CD8-positive, alpha-beta T cell (primary cell): ENCODE measurements at regions of chrX and their contacts with region 1.

Region 1: DNA sequence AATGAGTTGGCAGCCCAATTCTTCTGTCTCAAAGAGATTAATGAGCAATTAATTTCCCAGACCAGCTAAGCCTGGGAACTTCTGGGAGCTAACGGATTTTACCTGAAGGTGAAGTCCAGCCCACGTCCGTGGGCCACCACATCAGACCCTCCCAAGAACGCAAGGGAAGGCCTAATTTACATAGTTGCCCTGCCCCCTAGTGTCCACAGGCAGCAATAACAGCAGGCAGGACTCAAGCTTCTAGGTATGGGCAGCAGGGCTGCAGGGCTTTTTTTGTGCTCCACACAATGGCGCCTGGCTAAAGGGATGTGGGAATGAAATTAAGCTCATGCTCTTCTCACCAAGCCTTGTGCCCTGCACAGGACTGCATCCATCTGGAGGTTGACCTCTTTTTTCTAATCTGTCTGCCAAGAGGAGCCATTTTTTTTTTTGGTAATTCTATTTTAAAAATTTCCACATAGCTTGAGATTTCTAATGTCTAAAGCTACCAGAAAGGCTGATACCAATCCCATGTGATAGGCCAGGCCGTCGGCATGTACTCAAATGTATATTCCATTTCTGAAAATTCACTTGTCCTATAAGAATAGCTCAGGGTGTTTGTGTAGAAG is 111.9 kb upstream of the TMEM164 start:
- DNase-seq: peak in 8 of 9 experiments; percentile 1 to 64 (median 38)
- ATAC-seq: peak; percentile 70
- H3K4me3 ChIP-seq: no peak overlapping the region
- H3K4me3 Mint-ChIP-seq: no peak overlapping the region
- H3K27ac ChIP-seq: no peak overlapping the region
- H3K27ac Mint-ChIP-seq: no peak overlapping the region
- H3K4me1 ChIP-seq: no peaks in the 10 kb centered on the region
- H3K4me1 Mint-ChIP-seq: no peaks in the 10 kb centered on the region
- H3K27me3 ChIP-seq: no peaks in the 10 kb centered on the region
- H3K27me3 Mint-ChIP-seq: peaks cover 3% of the 10 kb centered on the region
- CTCF ChIP-seq: peak; percentile 65

Region 2: DNA sequence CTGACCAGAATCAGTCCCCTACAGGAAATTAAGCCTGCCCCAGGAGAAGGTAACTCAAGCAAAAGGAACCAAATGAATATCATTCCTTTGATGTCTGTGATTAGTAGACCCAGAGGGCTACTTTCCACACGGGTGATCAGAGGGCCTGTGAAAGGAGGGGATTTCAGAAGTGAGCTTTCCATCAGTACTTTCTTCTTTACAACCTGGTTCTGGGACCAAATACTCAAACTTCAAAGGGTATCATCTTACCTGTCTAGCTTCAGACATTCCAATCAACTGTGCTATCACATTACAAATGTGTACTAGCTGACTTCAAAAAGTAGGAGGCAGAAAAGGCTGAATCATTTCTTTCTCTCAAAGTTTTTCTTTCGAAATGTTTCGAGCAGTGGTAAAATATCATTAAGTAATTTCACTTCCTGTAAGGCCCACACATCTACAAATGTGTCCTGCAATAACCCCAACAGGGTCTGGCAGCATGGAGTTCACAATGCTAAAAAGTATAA is 181.8 kb before region 1 on chrX:
- CTCF ChIA-PET with region 1: interaction called, 10 read pairs
- POLR2A ChIA-PET with region 1: no interaction called
- intact Hi-C with region 1: loop called (anchors 1 to 5 kb)
- DNase-seq: peak in 2 of 9 experiments; percentile 3 to 32
- ATAC-seq: peak; percentile 20
- H3K4me3 ChIP-seq: no peak overlapping the region
- H3K4me3 Mint-ChIP-seq: peak overlapping the region; percentile 58
- H3K27ac ChIP-seq: peak overlapping the region in 1 of 2 experiments; percentile 45
- H3K27ac Mint-ChIP-seq: peak overlapping the region; percentile 67
- H3K4me1 ChIP-seq: peaks cover 19% of the 10 kb centered on the region
- H3K4me1 Mint-ChIP-seq: peaks cover 63% of the 10 kb centered on the region
- H3K27me3 ChIP-seq: no peaks in the 10 kb centered on the region
- H3K27me3 Mint-ChIP-seq: no peaks in the 10 kb centered on the region
- CTCF ChIP-seq: no peak

Region 3: DNA sequence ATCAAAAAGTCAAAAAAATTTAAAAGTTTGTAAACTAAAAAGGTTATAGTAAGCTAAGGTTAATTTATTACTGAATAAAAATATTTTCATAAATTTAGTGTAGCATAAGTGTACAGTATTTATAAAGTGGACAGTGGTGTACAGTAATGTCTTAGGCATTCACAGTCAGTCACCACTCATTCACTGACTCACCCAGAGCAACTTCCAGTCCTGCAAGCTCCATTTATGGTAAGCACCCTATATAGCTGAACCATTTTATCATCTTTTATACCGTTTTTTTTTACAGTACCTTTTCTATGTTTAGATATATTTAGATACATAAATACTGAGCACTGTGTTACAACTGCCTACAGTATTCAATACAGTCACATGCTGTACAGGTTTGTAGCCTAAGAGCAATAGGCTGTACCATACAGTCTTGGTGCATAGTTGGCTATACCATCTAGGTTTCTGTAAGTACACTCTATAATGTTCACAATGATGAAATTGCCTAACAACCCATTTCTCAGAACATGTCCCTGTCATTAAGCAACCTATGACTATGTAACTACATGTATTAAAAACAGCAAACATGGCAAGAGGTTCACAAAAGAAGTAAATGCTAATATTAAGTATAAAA is 176.6 kb before region 1 on chrX:
- CTCF ChIA-PET with region 1: interaction called, 10 read pairs
- POLR2A ChIA-PET with region 1: no interaction called
- intact Hi-C with region 1: loop called (anchors 1 to 5 kb)
- DNase-seq: no peak
- ATAC-seq: no peak
- H3K4me3 ChIP-seq: no peak overlapping the region
- H3K4me3 Mint-ChIP-seq: no peak overlapping the region
- H3K27ac ChIP-seq: no peak overlapping the region
- H3K27ac Mint-ChIP-seq: no peak overlapping the region
- H3K4me1 ChIP-seq: no peaks in the 10 kb centered on the region
- H3K4me1 Mint-ChIP-seq: peaks cover 42% of the 10 kb centered on the region
- H3K27me3 ChIP-seq: no peaks in the 10 kb centered on the region
- H3K27me3 Mint-ChIP-seq: no peaks in the 10 kb centered on the region
- CTCF ChIP-seq: no peak

Region 4: DNA sequence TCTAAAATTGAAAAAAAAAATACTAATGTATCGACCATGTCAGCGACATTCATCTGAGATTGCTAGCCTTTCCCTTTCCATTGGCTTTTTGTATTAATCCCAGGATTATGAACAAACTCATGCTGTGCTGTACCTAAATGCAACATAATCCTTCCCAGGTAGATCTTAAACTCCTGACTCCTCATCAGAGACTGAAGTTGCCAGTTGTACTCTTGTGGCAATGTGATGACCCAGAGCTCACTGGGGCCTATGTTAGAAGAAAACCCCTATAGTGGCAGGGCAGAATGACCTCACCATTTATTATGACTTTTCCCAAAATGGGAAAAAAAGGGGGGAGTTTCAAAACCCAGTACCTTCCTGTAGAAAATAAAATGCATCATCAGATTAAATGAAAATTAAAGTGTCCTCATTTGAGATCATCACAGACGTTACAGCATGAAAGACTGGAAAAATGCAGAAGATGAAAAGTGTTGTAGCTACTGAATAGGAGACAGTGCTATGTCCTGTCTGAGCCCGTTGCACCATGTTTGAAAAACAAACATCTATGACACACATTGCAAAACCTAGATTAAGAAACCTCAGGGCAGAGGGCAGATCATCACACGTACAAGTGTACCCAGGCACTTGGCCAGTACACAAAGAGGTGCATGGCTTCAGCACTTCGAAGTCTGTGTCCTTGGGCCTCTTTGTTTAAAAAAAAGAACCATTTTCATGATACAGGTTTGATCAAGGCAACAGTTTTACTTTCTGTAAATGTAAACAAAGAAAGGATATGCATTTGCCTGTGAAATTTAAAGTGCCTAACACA is 151.2 kb before region 1 on chrX:
- CTCF ChIA-PET with region 1: no interaction called
- POLR2A ChIA-PET with region 1: no interaction called
- intact Hi-C with region 1: no loop called
- DNase-seq: no peak
- ATAC-seq: no peak
- H3K4me3 ChIP-seq: no peak overlapping the region
- H3K4me3 Mint-ChIP-seq: no peak overlapping the region
- H3K27ac ChIP-seq: no peak overlapping the region
- H3K27ac Mint-ChIP-seq: no peak overlapping the region
- H3K4me1 ChIP-seq: no peaks in the 10 kb centered on the region
- H3K4me1 Mint-ChIP-seq: peaks cover 2% of the 10 kb centered on the region
- H3K27me3 ChIP-seq: no peaks in the 10 kb centered on the region
- H3K27me3 Mint-ChIP-seq: no peaks in the 10 kb centered on the region
- CTCF ChIP-seq: no peak

Region 5: DNA sequence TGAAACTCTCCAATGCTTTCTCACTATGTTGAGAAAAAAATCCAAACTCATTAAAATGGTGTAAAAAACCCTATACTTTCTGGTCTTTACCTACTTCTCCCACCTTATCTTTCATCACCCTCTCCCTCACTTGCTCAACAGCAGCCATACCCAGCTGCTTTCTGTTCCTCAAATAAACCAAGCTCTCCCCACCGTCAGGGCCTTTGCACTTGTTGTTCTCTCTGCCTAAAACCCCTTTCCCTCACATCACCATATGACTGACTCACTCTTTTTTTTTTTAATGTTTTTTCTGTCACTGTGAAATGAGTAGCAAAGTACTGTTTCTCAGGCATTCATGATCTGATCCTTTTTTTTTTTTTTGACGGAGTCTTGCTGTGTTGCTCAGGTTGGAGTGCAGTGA is 10.4 kb before region 1 on chrX:
- CTCF ChIA-PET with region 1: interaction called, 21 read pairs
- POLR2A ChIA-PET with region 1: no interaction called
- intact Hi-C with region 1: no loop called
- DNase-seq: peak in 1 of 9 experiments; percentile 9
- ATAC-seq: no peak
- H3K4me3 ChIP-seq: no peak overlapping the region
- H3K4me3 Mint-ChIP-seq: no peak overlapping the region
- H3K27ac ChIP-seq: no peak overlapping the region
- H3K27ac Mint-ChIP-seq: no peak overlapping the region
- H3K4me1 ChIP-seq: no peaks in the 10 kb centered on the region
- H3K4me1 Mint-ChIP-seq: no peaks in the 10 kb centered on the region
- H3K27me3 ChIP-seq: no peaks in the 10 kb centered on the region
- H3K27me3 Mint-ChIP-seq: no peaks in the 10 kb centered on the region
- CTCF ChIP-seq: no peak

Region 6: GRCh38 chrX:110389570-110389969 is 498.6 kb after region 1 on chrX:
- CTCF ChIA-PET with region 1: no interaction called
- POLR2A ChIA-PET with region 1: no interaction called
- intact Hi-C with region 1: no loop called
- DNase-seq: no peak
- ATAC-seq: no peak
- H3K4me3 ChIP-seq: no peak overlapping the region
- H3K4me3 Mint-ChIP-seq: no peak overlapping the region
- H3K27ac ChIP-seq: no peak overlapping the region
- H3K27ac Mint-ChIP-seq: no peak overlapping the region
- H3K4me1 ChIP-seq: no peaks in the 10 kb centered on the region
- H3K4me1 Mint-ChIP-seq: no peaks in the 10 kb centered on the region
- H3K27me3 ChIP-seq: no peaks in the 10 kb centered on the region
- H3K27me3 Mint-ChIP-seq: no peaks in the 10 kb centered on the region
- CTCF ChIP-seq: no peak